GM12878 (cell line): ENCODE measurements at regions of chr17 and their contacts with region 1.

Region 1: DNA sequence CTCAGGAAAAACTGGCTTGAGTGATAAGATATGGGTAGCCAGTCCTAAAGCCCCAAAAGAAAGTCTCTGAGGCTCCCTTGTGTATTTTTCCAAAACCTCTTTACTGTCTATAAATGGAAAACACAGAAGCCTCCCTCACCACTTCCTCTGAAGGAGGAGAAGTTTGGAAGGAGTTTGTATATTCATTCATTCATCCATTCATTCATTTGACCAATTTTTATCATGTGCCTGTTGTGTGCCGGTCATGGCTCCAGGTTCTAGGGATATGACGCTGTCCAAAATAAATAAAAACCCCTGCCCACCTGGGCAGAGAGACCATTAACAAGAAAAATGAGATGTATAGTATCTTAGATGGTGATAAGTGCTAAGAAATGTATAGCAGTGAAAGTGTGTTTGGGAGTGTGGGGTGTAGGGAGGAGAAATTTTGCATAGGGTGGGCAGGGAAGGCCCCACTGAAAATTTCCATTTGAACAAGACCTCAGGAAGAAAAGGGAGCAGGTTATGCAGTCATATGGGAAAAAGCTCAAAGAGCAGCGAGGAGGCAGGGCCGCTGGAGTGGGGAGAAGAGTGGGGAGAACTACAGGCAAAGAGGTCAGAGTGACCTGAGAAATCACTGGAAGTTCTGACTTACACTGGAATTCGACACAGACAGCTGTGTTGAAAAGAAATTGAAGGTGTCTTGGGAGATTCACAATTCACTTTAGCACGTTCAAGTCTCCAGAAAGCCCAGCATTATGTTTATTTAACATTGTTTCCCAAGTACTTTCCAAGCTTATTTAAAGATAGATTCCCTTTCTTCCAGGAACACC is 6.1 kb upstream of the WIPI1 start:
- DNase-seq: no peak
- ATAC-seq: no peak
- H3K4me3 ChIP-seq: no peak overlapping the region
- H3K27ac ChIP-seq: no peak overlapping the region; the same call in 1 of the 2 replicates
- H3K4me1 ChIP-seq: peaks cover 37% of the 10 kb centered on the region
- H3K27me3 ChIP-seq: no peaks in the 10 kb centered on the region
- CTCF ChIP-seq: no peak
- EP300 ChIP-seq: no peak
- POLR2A ChIP-seq: no peak
- RAD21 ChIP-seq: no peak

Region 2: DNA sequence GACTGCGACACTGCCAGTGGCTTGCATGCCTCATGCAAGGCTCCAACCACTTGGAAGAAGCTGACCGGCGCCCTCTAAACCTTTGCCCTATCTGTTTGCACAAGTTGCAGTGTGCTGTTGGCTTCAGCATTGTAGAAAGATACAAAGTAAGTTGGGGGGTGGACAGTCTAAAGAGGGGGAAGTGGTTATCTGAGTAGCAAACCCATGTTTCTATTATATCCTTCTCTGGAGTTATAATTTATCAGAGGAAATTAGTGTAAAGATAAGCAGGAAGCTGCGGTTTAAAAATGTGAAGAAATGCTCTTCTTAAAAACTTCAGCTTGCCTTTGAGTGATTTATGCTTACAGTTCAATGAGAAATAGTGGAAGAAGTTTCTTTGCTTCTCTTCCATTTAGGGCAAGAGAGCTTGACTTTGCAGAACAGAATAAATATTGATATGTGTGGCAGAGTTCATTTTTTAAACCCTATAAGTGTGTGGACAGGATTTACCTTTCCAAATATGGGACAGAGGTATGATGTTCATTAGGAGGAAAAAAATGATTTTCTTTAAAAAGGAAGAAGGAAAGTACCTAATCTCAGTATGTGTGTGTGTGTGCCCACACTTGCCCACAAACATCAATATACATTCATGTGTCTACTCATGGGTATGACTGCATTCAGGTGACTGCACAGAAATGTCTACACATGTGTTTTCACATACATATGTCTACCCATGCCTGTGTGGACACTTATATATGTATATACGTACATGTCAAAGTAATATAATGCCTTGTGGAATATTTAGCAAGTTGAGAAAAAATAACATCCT is 207.5 kb before region 1 on chr17:
- CTCF ChIA-PET with region 1: interaction called, 119 read pairs
- POLR2A ChIA-PET with region 1: interaction called, 4 read pairs
- RAD21 ChIA-PET with region 1: interaction called, 8 read pairs
- SMC1A ChIA-PET with region 1: interaction called, 163 read pairs
- in situ Hi-C with region 1: loop called (anchors 5 kb)
- intact Hi-C with region 1: no loop called
- DNase-seq: no peak
- ATAC-seq: peak; percentile 57
- H3K4me3 ChIP-seq: no peak overlapping the region
- H3K27ac ChIP-seq: no peak overlapping the region
- H3K4me1 ChIP-seq: peaks cover 7% of the 10 kb centered on the region; the same call in 1 of the 2 replicates
- H3K27me3 ChIP-seq: no peaks in the 10 kb centered on the region
- CTCF ChIP-seq: no peak
- EP300 ChIP-seq: no peak
- POLR2A ChIP-seq: no peak
- RAD21 ChIP-seq: no peak

Region 3: DNA sequence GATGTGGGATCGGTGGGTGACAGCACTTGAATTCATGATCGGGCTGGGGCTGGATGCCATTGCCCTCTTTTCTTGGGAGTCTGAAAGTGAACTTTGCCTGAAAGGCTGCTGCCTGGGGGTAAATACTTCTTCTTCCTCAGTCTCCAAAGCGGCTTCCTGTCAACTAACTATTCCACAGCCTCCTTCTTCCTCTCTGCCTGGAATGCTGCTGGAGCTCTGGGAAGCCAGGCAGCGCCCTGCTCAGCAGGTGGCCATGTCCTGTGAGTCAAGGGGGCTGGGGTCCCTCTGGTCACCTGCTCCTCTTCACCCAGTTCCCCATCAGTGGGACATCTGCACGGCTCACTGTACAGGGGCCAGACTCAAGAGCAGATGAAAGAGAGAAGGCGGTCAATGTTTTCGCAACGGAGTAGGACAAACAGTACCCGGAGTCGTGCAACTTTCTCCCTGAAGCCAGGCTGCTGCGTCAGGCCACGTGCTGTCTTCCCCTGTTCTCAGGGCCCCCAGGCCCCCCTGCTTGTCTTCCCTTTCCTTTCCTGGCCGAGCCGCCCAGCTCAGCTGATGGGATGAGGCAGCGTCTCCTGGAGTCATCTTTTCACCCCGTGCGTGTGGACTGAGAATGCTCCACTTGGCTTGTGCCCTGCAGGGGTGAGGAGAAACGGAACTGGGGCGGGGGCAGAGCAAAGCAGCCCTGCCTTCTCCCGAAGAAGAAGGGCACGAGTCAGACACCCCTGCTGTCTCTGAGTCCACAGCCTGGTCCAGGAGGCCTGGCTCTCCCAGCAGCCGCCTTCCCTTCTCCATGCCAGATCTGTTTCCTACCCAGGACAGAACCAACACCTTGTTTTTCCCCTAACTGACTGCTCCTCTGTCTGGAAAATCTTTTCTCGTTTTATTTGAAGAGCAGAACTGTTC is 85.3 kb before region 1 on chr17:
- CTCF ChIA-PET with region 1: no interaction called
- POLR2A ChIA-PET with region 1: no interaction called
- RAD21 ChIA-PET with region 1: no interaction called
- SMC1A ChIA-PET with region 1: no interaction called
- in situ Hi-C with region 1: no loop called
- intact Hi-C with region 1: no loop called
- DNase-seq: no peak
- ATAC-seq: no peak
- H3K4me3 ChIP-seq: no peak overlapping the region
- H3K27ac ChIP-seq: no peak overlapping the region
- H3K4me1 ChIP-seq: no peaks in the 10 kb centered on the region
- H3K27me3 ChIP-seq: no peaks in the 10 kb centered on the region; a peak in 1 of 4 replicates
- CTCF ChIP-seq: no peak
- EP300 ChIP-seq: no peak
- POLR2A ChIP-seq: no peak
- RAD21 ChIP-seq: no peak

Region 4: DNA sequence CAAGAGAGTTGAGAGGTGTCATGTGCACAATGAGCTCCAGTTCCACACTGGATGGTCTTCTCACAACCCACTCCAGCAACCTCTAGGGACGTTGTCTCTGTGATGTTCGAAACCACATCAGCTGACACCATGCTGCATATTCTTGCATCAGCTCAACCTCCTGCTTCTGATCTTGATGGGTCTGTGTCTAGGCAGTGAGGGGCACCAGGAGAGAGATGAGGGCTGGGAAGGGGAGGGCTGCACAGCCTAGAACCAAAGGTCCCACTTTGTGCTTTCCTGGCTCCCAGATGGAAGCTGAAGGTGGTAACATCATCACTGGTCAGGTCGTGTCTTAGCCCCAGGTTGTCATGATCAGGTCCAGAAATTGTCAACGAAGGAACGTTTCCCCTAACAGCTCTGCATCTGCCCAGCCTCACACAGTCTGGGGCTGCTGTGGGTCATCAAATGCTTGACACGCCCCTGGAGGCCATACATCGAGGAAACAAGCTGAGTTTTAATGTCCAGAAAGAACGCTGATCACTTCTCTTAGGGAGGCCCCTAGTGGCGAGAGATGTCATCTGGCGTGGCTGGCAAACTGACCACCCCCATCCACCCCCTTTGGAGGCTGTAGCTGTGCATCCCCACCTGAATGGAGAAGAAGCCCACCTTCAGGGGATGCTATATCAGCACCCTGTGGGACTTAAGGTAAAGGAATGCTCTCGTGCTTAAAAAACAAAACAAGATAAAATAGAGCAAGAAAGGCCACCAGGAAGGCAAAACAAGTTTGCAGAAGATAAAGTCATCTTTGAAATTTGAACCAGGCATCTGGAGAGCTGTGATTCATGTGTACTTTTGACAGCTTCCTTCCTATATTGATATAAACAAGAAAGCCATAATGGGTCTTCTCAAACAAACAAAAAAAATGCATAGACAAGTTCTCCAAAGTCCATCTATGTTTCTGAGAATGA is 64.5 kb before region 1 on chr17:
- CTCF ChIA-PET with region 1: interaction called, 14 read pairs
- POLR2A ChIA-PET with region 1: no interaction called
- RAD21 ChIA-PET with region 1: interaction called, 7 read pairs
- SMC1A ChIA-PET with region 1: interaction called, 11 read pairs
- in situ Hi-C with region 1: no loop called
- intact Hi-C with region 1: loop called (anchors 2 kb)
- DNase-seq: no peak
- ATAC-seq: peak; percentile 99
- H3K4me3 ChIP-seq: no peak overlapping the region
- H3K27ac ChIP-seq: no peak overlapping the region
- H3K4me1 ChIP-seq: peaks cover 6% of the 10 kb centered on the region
- H3K27me3 ChIP-seq: no peaks in the 10 kb centered on the region
- CTCF ChIP-seq: peak; percentile 84 to 89 (median 88)
- EP300 ChIP-seq: no peak
- POLR2A ChIP-seq: peak; percentile 34; the same call in 1 of the 2 replicates
- RAD21 ChIP-seq: peak; percentile 82

Region 5: GRCh38 chr17:68482576-68483041 is 19.2 kb after region 1 on chr17:
- CTCF ChIA-PET with region 1: interaction called, 19 read pairs
- POLR2A ChIA-PET with region 1: interaction called, 3 read pairs
- RAD21 ChIA-PET with region 1: no interaction called
- SMC1A ChIA-PET with region 1: interaction called, 5 read pairs
- in situ Hi-C with region 1: no loop called
- intact Hi-C with region 1: no loop called
- DNase-seq: no peak
- ATAC-seq: no peak
- H3K4me3 ChIP-seq: no peak overlapping the region
- H3K27ac ChIP-seq: no peak overlapping the region
- H3K4me1 ChIP-seq: peaks cover 2% of the 10 kb centered on the region
- H3K27me3 ChIP-seq: no peaks in the 10 kb centered on the region
- CTCF ChIP-seq: no peak
- EP300 ChIP-seq: no peak
- POLR2A ChIP-seq: no peak
- RAD21 ChIP-seq: no peak

Region 6: DNA sequence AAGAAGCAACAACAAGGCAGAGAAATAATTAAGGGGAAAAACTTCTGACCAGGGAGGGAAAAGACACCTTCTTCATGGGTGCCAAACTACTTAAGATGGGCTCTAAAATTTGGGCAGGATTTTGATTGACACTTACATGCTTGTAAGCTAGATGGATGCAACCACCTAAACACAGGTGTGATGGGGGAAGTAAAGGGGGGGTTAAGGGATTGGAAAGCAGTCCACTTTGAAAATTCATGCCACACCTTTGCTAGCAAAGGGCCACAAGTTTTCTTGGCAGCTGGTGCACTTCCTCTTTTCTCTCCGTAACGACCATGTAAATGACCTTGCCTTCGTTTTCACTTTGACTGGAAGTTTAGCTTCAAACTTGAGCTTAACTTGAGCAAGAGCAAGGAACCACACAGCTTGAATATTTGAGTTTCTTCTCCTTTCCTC is 34.5 kb after region 1 on chr17:
- CTCF ChIA-PET with region 1: interaction called, 59 read pairs
- POLR2A ChIA-PET with region 1: interaction called, 5 read pairs
- RAD21 ChIA-PET with region 1: interaction called, 43 read pairs
- SMC1A ChIA-PET with region 1: interaction called, 22 read pairs
- in situ Hi-C with region 1: no loop called
- intact Hi-C with region 1: no loop called
- DNase-seq: peak; percentile 94
- ATAC-seq: peak; percentile 94
- H3K4me3 ChIP-seq: peak overlapping the region; percentile 18; the same call in 1 of the 2 replicates
- H3K27ac ChIP-seq: peak overlapping the region; percentile 82
- H3K4me1 ChIP-seq: peaks cover 26% of the 10 kb centered on the region
- H3K27me3 ChIP-seq: no peaks in the 10 kb centered on the region
- CTCF ChIP-seq: no peak
- EP300 ChIP-seq: peak; percentile 66 to 98
- POLR2A ChIP-seq: no peak
- RAD21 ChIP-seq: no peak

Region 7: DNA sequence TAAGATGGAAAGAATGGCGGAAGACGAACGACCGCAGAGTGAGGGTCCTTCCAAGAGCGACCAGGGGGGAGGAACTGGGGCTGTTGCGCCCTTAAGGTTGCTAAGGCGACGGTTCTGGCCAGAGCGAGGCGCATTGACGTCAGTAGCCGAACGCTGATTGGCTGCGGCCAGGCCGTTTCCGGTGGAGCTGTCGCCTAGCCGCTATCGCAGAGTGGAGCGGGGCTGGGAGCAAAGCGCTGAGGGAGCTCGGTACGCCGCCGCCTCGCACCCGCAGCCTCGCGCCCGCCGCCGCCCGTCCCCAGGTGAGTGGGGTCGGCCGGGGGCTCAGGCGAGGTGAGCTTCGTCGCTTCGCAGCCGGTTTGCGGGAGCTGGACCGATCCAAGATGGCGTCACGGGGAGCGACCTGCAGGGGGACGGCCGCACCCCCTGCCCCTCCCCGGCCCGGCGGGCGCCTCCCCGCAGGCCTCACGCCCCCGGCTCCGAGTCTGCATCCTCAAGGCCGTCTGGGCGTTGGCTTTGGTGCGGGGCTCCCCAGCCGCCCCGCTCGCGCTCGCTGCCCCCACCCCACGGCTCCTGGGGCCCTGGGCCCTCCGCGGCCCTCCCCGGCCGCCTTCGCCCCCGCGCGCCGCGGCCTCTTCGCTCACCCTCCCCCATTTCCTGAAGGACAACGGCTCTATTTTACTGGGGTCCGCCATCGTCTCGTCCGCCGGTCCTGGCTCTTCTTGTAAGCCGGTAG is 49.0 kb after region 1 on chr17 and contains the start of gene PRKAR1A:
- CTCF ChIA-PET with region 1: interaction called, 4 read pairs
- POLR2A ChIA-PET with region 1: interaction called, 6 read pairs
- RAD21 ChIA-PET with region 1: interaction called, 4 read pairs
- SMC1A ChIA-PET with region 1: interaction called, 9 read pairs
- in situ Hi-C with region 1: no loop called
- intact Hi-C with region 1: loop called (anchors 5 kb)
- DNase-seq: peak; percentile 72
- ATAC-seq: peak; percentile 90
- H3K4me3 ChIP-seq: peak within 1 kb of the TSS; percentile 88
- H3K27ac ChIP-seq: peak within 1 kb of the TSS; percentile 98
- H3K4me1 ChIP-seq: peaks cover 7% of the 10 kb centered on the region; the same call in 1 of the 2 replicates
- H3K27me3 ChIP-seq: no peaks in the 10 kb centered on the region
- CTCF ChIP-seq: 0 out of 6 replicates have a peak, but pooled peaks of 1 of the 3 experiments have one; percentile 1
- EP300 ChIP-seq: peak; percentile 67; a peak in 2 of 4 replicates
- POLR2A ChIP-seq: peak; percentile 92
- RAD21 ChIP-seq: no peak
- polyA plus RNA-seq, gene PRKAR1A: 29.1 to 35.6 TPM

Region 8: DNA sequence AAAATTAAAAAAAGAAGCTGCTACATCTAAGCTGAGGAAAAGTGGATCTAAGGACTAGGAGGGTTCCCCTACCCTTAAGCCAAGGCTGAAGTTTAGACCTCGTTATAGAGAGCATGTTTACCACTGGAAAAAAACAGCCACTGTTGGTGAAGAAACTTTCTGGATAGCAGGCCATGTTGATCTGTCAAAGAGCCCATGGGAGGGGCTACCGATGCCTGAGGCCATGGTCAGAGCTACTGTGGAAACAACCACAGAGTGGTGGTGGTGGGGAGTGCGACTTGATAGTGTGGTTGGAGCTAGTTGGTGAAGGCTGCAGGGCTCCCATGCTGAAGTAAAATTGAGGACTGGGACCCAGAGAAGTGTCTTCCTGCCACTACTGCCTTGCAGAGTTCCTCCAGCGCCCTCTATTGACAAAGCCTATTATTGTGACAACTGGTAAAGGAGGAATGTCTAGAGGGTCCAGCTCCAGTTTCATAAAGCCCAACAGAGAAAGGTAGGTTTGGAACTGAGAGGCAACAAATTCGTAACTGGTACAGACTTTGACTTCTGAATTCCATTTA is 150.4 kb after region 1 on chr17:
- CTCF ChIA-PET with region 1: interaction called, 18 read pairs
- POLR2A ChIA-PET with region 1: no interaction called
- RAD21 ChIA-PET with region 1: interaction called, 5 read pairs
- SMC1A ChIA-PET with region 1: interaction called, 7 read pairs
- in situ Hi-C with region 1: no loop called
- intact Hi-C with region 1: no loop called
- DNase-seq: no peak
- ATAC-seq: peak; percentile 79
- H3K4me3 ChIP-seq: no peak overlapping the region
- H3K27ac ChIP-seq: no peak overlapping the region
- H3K4me1 ChIP-seq: no peaks in the 10 kb centered on the region
- H3K27me3 ChIP-seq: no peaks in the 10 kb centered on the region
- CTCF ChIP-seq: peak; percentile 62 to 69 (median 67); a peak in 5 of 6 replicates
- EP300 ChIP-seq: no peak
- POLR2A ChIP-seq: no peak
- RAD21 ChIP-seq: peak; percentile 61